ENCODE measurements at regions of chr12 and their contacts with region 1.

Region 1: DNA sequence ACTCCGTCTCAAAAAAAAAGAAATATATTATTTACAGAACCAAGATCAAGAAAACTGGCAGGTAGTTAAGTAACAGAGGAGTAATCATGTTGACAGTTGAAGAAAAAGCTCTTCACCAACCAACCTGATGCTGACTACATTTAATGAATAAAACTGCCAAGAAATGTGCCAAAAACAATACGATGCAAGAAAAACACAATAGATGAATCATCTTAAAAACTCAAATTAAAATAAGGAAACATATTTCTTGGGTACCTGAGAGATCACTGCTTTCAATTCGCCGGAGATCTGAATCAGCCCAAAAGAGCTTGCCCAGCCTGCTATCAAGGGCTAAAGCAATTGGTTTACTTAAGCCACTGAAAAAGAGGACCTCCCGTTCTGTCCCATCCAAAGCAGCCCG is 76.4 kb downstream of the BCL2L14 start:
- DNase-seq: no peak
- ATAC-seq: no peak
- H3K4me3 ChIP-seq: no peak overlapping the region
- H3K27ac ChIP-seq: no peak overlapping the region
- H3K4me1 ChIP-seq: no peaks in the 10 kb centered on the region
- H3K27me3 ChIP-seq: no peaks in the 10 kb centered on the region
- CTCF ChIP-seq: no peak

Region 2: DNA sequence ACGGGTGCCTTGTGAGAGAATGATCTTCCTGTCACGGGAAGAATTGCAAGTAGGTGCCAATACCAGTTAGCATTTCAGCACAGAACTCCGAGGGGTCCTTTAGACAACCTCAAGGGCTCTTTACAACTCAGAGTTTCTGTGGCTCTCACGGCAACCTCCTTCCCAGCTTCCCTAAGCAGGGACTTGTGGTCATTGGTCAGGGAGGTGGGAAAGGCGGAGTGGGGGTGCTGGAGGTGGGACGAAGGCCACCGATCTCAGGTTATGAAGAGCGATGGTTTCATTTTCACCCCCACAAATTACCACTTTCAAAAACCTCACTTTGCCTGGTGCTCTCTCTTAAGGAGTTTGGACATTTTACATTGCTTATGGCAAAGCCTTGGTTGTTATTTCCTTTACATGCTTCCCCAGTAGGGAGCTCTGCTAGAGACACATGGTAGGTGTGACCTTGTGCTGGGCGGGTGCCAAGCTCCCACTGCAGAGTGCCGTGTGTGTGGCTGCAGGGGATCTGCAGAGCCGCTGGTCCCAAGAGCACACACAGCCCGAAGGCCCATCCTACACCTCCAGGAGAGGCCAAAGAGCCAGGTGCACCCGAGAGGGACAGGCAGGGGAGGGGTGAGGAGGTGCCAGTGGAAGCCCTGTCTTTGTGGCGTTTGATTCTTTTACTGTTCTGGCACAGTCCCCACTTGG is 55.0 kb before region 1 on chr12:
- intact Hi-C with region 1: loop called in 1 of 2 experiments (anchors 10 kb)
- DNase-seq: no peak
- ATAC-seq: no peak
- H3K4me3 ChIP-seq: no peak overlapping the region
- H3K27ac ChIP-seq: no peak overlapping the region
- H3K4me1 ChIP-seq: no peaks in the 10 kb centered on the region
- H3K27me3 ChIP-seq: no peaks in the 10 kb centered on the region
- CTCF ChIP-seq: no peak

Region 3: DNA sequence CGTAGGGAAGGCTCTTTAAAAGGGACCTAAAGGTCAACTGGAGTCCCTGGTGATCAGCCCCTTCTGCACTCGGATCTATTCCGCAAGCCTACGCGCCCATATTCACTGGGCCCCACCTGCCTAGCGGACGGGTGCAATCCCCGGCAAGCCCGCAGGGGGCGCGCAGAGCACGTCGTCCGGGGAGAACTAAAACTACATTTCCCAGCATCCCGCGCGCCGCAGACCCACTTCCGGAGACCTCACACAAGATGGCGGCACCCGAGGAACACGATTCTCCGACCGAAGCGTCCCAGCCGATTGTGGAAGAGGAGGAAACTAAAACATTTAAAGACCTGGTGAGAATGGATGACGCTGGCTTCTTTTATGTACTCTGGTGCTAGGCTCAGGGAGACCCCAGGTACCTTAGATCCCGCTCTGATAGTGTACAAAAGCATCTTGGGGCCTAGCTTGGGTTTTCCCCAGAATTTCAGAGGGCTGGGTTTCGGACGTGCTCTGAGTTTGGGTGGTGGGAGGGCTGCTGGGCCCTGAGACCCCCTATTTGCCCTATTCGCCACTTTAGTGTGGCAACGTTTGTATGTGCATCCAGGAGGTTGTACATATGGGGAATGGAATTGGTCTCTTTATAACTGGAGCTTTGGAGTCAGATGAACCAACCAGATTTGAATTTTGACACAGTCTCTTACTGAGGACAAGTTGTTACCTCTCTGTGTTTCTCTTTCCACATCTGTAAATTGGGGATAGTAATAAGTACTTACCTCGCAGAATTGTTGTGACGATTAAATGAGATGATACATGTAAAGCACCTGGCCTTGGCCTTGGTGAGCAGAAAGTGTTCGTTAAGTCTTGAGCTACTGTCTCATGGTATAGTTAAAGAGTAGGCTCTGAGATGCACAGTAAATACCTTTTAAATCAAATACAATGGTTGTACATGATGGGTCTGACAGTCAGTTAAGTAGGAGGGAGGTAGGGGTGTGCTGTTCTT is 666.3 kb after region 1 on chr12 and contains the start of gene DDX47:
- intact Hi-C with region 1: loop called in 1 of 2 experiments (anchors 10 kb)
- DNase-seq: peak; percentile 96 to 98
- ATAC-seq: peak; percentile 99 to 100 (median 100)
- H3K4me3 ChIP-seq: peak within 1 kb of the TSS; percentile 78
- H3K27ac ChIP-seq: peak within 1 kb of the TSS; percentile 77
- H3K4me1 ChIP-seq: peaks cover 32% of the 10 kb centered on the region
- H3K27me3 ChIP-seq: no peaks in the 10 kb centered on the region
- CTCF ChIP-seq: peak; percentile 96
- total RNA-seq, gene DDX47: 39.6 to 51.4 (median 45.7) TPM